ENCODE measurements at regions of chr17 and their contacts with region 1.

Region 1: GRCh38 chr17:43199633-43200032 is 12.0 kb upstream of the TMEM106A start:
- DNase-seq: no peak
- ATAC-seq: no peak

Region 2: DNA sequence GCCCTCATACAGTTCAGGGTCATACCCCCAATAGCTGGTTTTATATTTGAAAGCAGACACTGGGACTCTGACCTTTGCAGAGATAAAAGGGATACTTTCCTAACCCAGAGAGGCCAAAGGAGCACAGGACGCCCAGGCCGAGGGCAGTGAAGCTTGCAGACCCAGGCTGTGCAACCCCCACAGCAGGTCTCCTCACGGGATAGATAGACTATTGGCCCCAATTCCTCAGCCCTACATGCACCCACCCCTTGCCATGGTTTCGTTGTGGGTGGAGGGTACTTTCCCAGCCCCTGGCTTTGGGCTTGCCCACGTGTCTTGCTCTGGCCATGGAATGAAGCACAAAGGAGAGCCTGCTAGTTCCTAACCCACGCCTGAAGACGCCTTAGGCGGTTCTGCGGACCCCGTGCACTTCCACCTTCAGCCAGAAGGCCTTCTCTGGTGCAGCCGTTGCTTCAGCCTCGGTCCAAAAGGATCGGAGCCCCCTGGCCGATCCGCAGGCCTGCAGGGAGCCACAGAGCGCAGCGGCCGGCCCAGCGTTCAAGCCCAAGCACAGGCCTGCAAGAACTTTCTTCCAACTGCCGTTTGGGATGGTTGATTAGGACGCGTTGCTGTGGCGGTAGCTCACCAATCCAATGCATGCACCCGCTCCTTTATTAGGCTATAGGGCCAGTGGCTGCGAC is 64.7 kb before region 1 on chr17:
- intact Hi-C with region 1: loop called (anchors 10 kb)
- DNase-seq: no peak
- ATAC-seq: no peak